CD4-positive, alpha-beta T cell (primary cell): ENCODE measurements at regions of chr6 and their contacts with region 1.

Region 1: DNA sequence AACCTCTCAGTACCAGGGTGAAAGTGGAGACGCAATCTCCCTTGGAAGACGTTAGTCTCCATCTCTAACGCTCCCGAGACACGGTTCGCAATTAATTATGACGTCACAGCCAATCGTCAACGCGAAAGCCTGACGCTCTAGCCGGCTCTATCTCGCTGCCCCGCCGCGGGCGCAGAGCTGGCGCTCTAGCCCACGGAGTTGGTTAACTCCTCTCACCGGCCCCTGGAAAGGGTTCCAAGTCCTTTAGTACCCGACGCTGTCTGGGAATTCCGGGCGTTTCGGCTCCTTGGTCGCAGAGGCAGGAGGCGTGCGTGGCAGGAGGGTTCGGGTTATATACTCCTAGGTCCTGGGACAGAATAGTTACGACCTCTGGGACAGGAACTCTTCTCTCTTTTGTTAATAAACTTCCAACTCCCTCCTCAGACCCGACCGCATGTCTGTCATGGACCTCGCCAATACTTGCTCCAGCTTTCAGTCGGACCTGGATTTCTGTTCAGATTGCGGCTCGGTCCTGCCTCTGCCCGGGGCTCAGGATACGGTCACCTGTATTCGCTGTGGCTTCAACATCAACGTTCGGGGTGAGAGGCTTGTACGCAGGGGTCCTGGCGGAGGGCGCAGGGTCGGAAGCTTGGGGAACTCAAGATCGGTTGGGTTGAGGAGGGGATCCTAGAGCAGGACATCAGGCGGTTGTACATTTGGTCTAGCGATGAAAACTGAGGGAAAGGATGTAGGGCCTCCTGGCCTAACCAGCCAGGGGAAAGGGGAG is at the start of gene POLR1H:
- DNase-seq: peak; percentile 72 to 96 (median 84)
- ATAC-seq: peak; percentile 86
- H3K4me3 ChIP-seq: peak within 1 kb of the TSS; percentile 89
- H3K4me3 Mint-ChIP-seq: peak within 1 kb of the TSS; percentile 95
- H3K27ac ChIP-seq: peak within 1 kb of the TSS; percentile 89 to 94
- H3K27ac Mint-ChIP-seq: peak within 1 kb of the TSS; percentile 97
- H3K4me1 ChIP-seq: peaks cover 29% of the 10 kb centered on the region
- H3K4me1 Mint-ChIP-seq: peaks cover 46% of the 10 kb centered on the region
- H3K27me3 ChIP-seq: no peaks in the 10 kb centered on the region
- H3K27me3 Mint-ChIP-seq: no peaks in the 10 kb centered on the region
- CTCF ChIP-seq: no peak
- total RNA-seq, gene POLR1H: 36.5 to 39.4 TPM

Region 2: DNA sequence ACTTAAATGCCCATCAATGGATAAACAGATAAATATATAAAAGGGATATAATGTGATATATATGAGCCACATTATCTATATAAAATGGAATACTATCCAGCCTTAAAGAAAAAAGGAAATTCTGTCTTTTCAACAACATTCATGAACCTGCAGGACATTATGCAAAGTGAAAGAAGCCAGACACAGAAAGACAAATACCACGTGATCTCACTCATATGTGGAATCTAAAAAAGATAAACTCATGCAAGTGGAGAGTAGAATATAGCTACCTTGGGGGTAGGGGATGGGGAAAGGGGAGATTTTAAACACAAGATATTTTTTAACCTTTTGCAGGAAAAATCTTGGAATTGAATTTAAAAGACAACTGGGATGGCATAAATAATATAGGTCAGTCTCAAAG is 963.5 kb before region 1 on chr6:
- CTCF ChIA-PET with region 1: no interaction called
- POLR2A ChIA-PET with region 1: no interaction called
- intact Hi-C with region 1: no loop called
- DNase-seq: no peak
- ATAC-seq: no peak
- H3K4me3 ChIP-seq: no peak overlapping the region
- H3K4me3 Mint-ChIP-seq: no peak overlapping the region
- H3K27ac ChIP-seq: no peak overlapping the region
- H3K27ac Mint-ChIP-seq: no peak overlapping the region
- H3K4me1 ChIP-seq: no peaks in the 10 kb centered on the region
- H3K4me1 Mint-ChIP-seq: no peaks in the 10 kb centered on the region
- H3K27me3 ChIP-seq: peaks cover 0 to 6% of the 10 kb centered on the region in 2 experiments
- H3K27me3 Mint-ChIP-seq: peaks cover 69% of the 10 kb centered on the region
- CTCF ChIP-seq: no peak

Region 3: DNA sequence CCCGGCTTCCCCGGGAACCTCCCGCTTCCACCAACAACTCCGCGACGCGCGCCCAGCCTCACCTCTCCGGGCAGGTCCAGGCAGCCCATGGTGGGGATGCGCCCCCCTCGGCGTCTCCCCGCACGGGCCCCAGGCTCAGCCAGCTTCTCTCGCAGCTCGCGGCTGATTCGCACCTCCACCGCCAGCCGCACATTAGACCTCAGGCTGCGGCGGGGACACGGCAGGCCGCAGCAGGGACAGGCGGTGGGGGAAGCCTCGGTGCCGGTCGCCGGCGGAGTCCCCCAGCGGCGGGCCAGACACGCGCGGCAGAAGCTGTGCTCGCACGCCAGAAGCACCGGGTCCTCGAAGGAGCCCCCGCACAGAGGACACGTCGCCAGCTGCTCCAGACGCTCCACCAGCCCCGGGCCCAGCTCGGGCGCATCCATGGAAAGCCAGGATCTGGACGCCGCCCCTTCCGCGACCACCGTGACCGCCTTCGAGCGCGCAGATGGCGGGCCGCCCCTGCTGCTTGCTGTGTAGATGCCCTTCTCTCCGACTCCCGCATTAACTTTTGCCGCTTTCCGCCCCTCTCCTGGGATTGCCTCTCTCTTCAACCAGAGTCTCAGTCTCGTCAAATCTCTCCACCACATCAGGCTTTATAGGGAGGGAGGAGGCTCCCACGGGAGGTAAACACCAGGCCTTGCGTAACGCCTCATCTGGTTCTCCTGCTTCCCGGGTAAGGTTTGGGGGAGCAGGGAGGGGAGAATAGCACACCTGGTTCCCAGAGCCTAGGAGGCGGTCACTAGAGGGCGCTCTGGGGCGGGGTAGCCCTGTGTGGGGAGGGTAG is 14.1 kb after region 1 on chr6 and contains the start of gene RNF39:
- CTCF ChIA-PET with region 1: no interaction called
- POLR2A ChIA-PET with region 1: interaction called, 13 read pairs
- intact Hi-C with region 1: no loop called
- DNase-seq: peak in 4 of 14 experiments; percentile 19 to 58 (median 48)
- ATAC-seq: peak; percentile 50
- H3K4me3 ChIP-seq: peak within 1 kb of the TSS; percentile 42
- H3K4me3 Mint-ChIP-seq: peak within 1 kb of the TSS; percentile 84
- H3K27ac ChIP-seq: no peak within 1 kb of the TSS
- H3K27ac Mint-ChIP-seq: no peak within 1 kb of the TSS
- H3K4me1 ChIP-seq: peaks cover 52% of the 10 kb centered on the region
- H3K4me1 Mint-ChIP-seq: peaks cover 59% of the 10 kb centered on the region
- H3K27me3 ChIP-seq: peaks cover 32 to 39% of the 10 kb centered on the region in 2 experiments
- H3K27me3 Mint-ChIP-seq: peaks cover 52% of the 10 kb centered on the region
- CTCF ChIP-seq: peak; percentile 40
- total RNA-seq, gene RNF39: not detected

Region 4: GRCh38 chr6:30656513-30656912 is 595.2 kb after region 1 on chr6:
- CTCF ChIA-PET with region 1: no interaction called
- POLR2A ChIA-PET with region 1: no interaction called
- intact Hi-C with region 1: no loop called
- DNase-seq: peak in 2 of 14 experiments; percentile 34 to 39
- ATAC-seq: no peak
- H3K4me3 ChIP-seq: no peak overlapping the region
- H3K4me3 Mint-ChIP-seq: no peak overlapping the region
- H3K27ac ChIP-seq: no peak overlapping the region
- H3K27ac Mint-ChIP-seq: no peak overlapping the region
- H3K4me1 ChIP-seq: no peaks in the 10 kb centered on the region
- H3K4me1 Mint-ChIP-seq: no peaks in the 10 kb centered on the region
- H3K27me3 ChIP-seq: no peaks in the 10 kb centered on the region
- H3K27me3 Mint-ChIP-seq: no peaks in the 10 kb centered on the region
- CTCF ChIP-seq: no peak